T-cell (primary cell): ENCODE measurements at regions of chr14 and their contacts with region 1.

Region 1: DNA sequence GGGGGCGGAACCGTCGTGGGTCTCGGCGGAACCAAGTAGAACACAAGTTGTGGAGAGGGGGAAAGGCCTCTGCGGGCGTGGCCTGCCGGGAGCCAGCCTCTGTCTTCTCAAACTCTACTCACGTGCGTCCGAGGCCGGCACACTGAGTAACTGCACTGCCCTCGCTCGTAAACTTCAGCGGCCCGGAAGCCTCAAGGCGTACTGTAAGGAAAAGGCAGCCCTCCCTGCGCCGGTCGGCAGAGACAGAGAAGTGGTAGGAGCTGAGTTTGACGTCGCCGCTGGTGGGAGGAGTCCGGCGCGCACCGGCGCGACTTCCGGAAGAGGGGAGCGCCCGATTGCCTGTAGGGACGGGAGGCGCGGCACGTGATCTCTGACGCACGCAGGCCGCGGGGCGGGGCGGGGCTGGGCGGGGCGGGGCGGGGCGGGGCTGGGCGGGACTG is at the start of gene FBXO33:
- DNase-seq: peak; percentile 91 to 98 (median 96)
- ATAC-seq: peak; percentile 85 to 87 (median 86)
- H3K4me3 ChIP-seq: peak within 1 kb of the TSS; percentile 88 to 98
- H3K4me3 Mint-ChIP-seq: peak within 1 kb of the TSS; percentile 98 to 100 (median 99)
- H3K27ac ChIP-seq: peak within 1 kb of the TSS; percentile 100
- H3K27ac Mint-ChIP-seq: peak within 1 kb of the TSS; percentile 100
- H3K4me1 ChIP-seq: peaks cover 27 to 30% of the 10 kb centered on the region in 2 experiments
- H3K4me1 Mint-ChIP-seq: peaks cover 44 to 47% (median 45%) of the 10 kb centered on the region in 3 donors
- H3K27me3 ChIP-seq: no peaks in the 10 kb centered on the region
- H3K27me3 Mint-ChIP-seq: no peaks in the 10 kb centered on the region
- total RNA-seq, gene FBXO33: 22.5 to 64.0 (median 28.4) TPM

Region 2: DNA sequence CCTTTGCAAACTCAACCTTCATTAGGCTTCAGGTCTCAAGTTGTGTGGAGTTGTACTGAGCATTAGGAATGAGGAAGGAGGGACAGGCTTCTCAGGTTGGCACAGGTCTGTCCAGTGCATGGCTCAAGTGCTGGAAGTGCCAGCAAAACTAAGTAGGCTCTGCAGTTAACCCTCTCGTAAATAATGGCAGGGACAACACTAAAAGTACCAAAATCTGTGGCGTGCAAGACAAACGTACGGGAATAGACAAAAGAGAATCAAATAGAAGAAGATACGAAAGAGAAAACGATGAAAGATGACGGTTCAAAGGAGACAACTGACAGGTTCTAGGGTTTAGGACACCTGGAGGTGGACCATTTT is 262.7 kb before region 1 on chr14:
- CTCF ChIA-PET with region 1: no interaction called
- POLR2A ChIA-PET with region 1: interaction called, 6 to 11 read pairs
- DNase-seq: no peak
- ATAC-seq: no peak
- H3K4me3 ChIP-seq: peak overlapping the region; percentile 89 to 98
- H3K4me3 Mint-ChIP-seq: peak overlapping the region; percentile 94 to 98 (median 96)
- H3K27ac ChIP-seq: peak overlapping the region; percentile 86
- H3K27ac Mint-ChIP-seq: peak overlapping the region; percentile 97
- H3K4me1 ChIP-seq: peaks cover 19 to 26% of the 10 kb centered on the region in 2 experiments
- H3K4me1 Mint-ChIP-seq: peaks cover 45 to 56% (median 54%) of the 10 kb centered on the region in 3 donors
- H3K27me3 ChIP-seq: no peaks in the 10 kb centered on the region
- H3K27me3 Mint-ChIP-seq: no peaks in the 10 kb centered on the region

Region 3: GRCh38 chr14:39184628-39185255 is 247.5 kb before region 1 on chr14:
- CTCF ChIA-PET with region 1: no interaction called
- POLR2A ChIA-PET with region 1: interaction called in 1 of 2 experiments, 10 read pairs
- DNase-seq: peak in 1 of 35 experiments; percentile 7
- ATAC-seq: no peak
- H3K4me3 ChIP-seq: no peak overlapping the region
- H3K4me3 Mint-ChIP-seq: no peak overlapping the region
- H3K27ac ChIP-seq: no peak overlapping the region
- H3K27ac Mint-ChIP-seq: no peak overlapping the region
- H3K4me1 ChIP-seq: peaks cover 4 to 7% of the 10 kb centered on the region in 2 experiments
- H3K4me1 Mint-ChIP-seq: peaks cover 0 to 12% (median 1%) of the 10 kb centered on the region in 3 donors
- H3K27me3 ChIP-seq: no peaks in the 10 kb centered on the region
- H3K27me3 Mint-ChIP-seq: no peaks in the 10 kb centered on the region

Region 4: GRCh38 chr14:39322807-39323206 is 109.4 kb before region 1 on chr14:
- CTCF ChIA-PET with region 1: no interaction called
- POLR2A ChIA-PET with region 1: interaction called in 1 of 2 experiments, 13 read pairs
- DNase-seq: no peak
- ATAC-seq: no peak
- H3K4me3 ChIP-seq: no peak overlapping the region
- H3K4me3 Mint-ChIP-seq: no peak overlapping the region
- H3K27ac ChIP-seq: no peak overlapping the region
- H3K27ac Mint-ChIP-seq: peak overlapping the region in 1 of 2 donors; percentile 46
- H3K4me1 ChIP-seq: no peaks in the 10 kb centered on the region
- H3K4me1 Mint-ChIP-seq: no peaks in the 10 kb centered on the region
- H3K27me3 ChIP-seq: no peaks in the 10 kb centered on the region
- H3K27me3 Mint-ChIP-seq: no peaks in the 10 kb centered on the region

Region 5: DNA sequence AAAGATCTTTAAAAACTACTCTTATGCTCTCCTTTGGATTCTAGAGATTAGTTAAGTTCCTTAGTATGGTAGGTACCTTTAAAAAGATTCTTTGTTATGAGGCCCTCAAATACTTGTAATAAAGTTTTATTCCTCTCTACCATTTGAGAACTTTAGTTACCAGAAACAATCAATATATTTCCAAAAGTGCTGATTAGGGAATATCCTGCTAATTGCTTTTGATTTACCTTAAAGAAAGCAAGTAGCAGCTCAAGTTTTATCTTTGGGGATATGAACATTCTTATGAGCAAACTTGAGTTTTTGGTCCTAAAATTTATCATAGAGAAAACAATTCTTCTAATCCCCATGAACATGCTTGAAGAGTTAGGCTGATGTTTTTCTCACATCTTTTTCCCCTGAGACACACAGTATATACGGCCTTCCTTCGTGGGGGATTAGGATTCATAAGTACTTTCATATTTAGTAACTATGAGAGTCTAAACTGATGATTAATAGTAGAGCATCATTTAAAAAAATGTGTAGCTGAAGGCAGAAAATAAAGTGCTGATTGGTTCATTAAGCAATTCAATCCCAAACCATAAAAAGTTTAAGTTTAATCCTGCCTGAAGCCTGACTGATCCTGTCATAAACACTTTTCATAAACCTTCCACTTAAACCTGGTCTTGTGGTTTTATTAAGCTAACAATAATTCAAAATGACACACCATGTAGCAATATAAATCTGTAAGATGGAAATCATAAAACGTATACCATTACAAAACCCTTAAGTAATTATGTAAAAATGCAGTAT is 380.5 kb after region 1 on chr14:
- CTCF ChIA-PET with region 1: no interaction called
- POLR2A ChIA-PET with region 1: no interaction called
- DNase-seq: no peak
- ATAC-seq: no peak
- H3K4me3 ChIP-seq: no peak overlapping the region
- H3K4me3 Mint-ChIP-seq: no peak overlapping the region
- H3K27ac ChIP-seq: no peak overlapping the region
- H3K27ac Mint-ChIP-seq: no peak overlapping the region
- H3K4me1 ChIP-seq: no peaks in the 10 kb centered on the region
- H3K4me1 Mint-ChIP-seq: no peaks in the 10 kb centered on the region
- H3K27me3 ChIP-seq: no peaks in the 10 kb centered on the region
- H3K27me3 Mint-ChIP-seq: no peaks in the 10 kb centered on the region